ENCODE measurements at regions of chr12 and their contacts with region 1.

Region 1: DNA sequence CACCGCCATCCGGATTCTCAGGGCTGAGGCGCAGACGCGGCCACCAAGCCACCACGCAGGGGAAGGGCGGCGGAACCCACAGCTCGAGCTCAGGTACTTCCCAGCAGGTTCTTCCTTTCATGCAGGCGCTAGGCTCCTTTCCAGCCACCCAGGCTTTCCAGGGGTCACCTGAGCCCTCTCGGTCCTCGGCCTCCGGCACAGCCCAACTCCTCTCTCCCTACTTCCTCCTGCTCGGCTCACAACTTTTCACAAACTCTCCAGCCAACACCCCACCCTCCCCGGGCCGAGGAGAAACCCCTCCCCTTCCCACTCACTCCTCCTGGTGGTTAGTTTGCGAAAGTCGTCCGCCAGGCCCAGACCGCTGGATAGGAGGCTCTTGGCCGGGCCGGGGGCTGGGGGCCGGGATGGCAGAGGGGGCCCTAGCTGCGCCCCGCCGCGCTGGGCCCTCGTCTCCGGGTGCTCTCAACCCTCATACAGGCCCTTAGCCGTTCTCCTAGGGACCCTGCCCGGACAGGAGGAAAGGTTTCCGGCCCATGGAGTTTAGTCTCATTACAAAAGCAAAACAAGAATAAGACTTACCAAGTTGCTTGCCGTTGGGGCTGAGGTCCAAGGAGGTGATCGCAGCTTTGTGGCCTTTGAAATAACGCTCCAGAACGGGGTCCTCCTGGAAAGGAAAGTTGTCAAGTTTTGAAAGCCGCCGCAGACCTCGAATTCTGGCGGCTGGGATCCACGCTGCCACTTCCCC is at the start of gene GALNT4:
- DNase-seq: peak; percentile 75
- ATAC-seq: peak; percentile 78
- H3K4me3 Mint-ChIP-seq: peak within 1 kb of the TSS; percentile 99
- H3K27ac Mint-ChIP-seq: peak within 1 kb of the TSS; percentile 95
- H3K4me1 Mint-ChIP-seq: peaks cover 60% of the 10 kb centered on the region
- H3K27me3 Mint-ChIP-seq: no peaks in the 10 kb centered on the region
- CTCF ChIP-seq: no peak
- total RNA-seq, gene GALNT4: 6.2 and 6.3 TPM in 2 replicates

Region 2: DNA sequence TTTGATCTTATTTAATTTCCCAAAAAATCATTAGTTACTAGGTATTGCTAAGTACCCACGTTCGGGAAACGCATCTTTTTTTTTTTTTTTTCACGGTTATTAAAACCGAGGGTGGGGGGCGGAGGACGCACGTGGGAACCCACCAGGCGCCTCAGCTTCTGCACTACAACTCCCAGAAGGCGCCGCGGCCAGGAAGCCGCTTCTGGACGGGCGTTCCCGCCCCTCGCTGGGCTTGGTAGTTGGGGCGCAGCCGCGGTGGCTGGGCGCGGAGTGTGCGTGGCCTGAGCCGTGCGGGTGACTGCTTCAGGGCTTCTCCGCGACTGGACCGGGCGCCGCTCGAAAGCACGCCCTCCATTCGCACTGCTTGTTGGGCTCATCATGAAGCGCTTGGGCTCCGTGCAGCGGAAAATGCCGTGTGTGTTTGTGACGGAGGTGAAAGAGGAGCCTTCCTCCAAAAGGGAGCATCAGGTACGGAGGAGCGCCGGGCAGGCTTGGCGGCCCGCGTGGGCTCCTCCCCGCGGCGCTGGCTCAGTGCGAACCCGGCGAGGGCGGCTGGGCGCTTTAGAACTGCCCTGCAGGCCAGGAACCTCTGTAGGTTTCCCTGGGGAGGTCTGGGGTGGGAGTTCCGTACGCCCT is 1489.3 kb before region 1 on chr12:
- CTCF ChIA-PET with region 1: no interaction called
- POLR2A ChIA-PET with region 1: no interaction called
- intact Hi-C with region 1: loop called (anchors 1 kb)
- DNase-seq: peak; percentile 84
- ATAC-seq: peak; percentile 98
- H3K4me3 Mint-ChIP-seq: peak overlapping the region; percentile 97
- H3K27ac Mint-ChIP-seq: peak overlapping the region; percentile 93
- H3K4me1 Mint-ChIP-seq: peaks cover 31% of the 10 kb centered on the region
- H3K27me3 Mint-ChIP-seq: no peaks in the 10 kb centered on the region
- CTCF ChIP-seq: no peak

Region 3: GRCh38 chr12:89051065-89051677 is 473.5 kb before region 1 on chr12:
- CTCF ChIA-PET with region 1: interaction called, 3 read pairs
- POLR2A ChIA-PET with region 1: no interaction called
- intact Hi-C with region 1: loop called (anchors 1 kb)
- DNase-seq: no peak
- ATAC-seq: peak; percentile 67
- H3K4me3 Mint-ChIP-seq: no peak overlapping the region
- H3K27ac Mint-ChIP-seq: no peak overlapping the region
- H3K4me1 Mint-ChIP-seq: no peaks in the 10 kb centered on the region
- H3K27me3 Mint-ChIP-seq: no peaks in the 10 kb centered on the region
- CTCF ChIP-seq: no peak

Region 4: DNA sequence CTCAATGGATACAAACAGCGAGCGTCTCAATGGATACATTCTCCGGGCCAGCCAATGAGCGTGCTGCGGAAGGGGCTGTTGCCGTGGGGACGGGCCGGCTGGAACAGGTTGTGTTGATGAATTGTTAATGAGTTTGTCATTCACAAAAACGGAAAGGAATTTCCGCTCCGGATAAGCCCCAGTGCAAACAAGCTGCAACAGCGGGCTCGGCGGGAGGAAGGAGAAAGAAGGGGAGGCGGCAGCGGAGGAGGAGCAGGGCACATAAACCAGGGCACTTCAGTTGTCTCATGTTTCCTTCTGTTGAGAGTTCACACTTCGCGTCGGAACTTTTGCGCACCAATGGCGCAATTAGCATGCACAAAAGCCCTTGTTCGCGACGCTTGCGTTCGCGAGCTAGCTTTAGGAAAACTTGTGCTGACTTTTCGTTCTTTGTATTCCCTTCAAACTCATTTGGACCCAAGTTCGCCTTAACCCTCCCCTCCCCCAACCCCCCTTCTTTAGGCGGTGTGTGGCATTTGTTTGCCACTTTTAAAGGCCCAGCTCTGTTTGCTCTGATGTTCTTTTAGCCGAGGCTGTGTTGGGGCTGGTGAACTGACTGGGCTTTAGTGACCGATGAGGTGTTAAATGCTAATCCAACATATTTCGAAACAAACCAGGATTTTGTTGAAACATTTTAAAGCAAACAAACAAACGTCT is 172.1 kb before region 1 on chr12 and contains the start of gene DUSP6:
- CTCF ChIA-PET with region 1: no interaction called
- POLR2A ChIA-PET with region 1: interaction called, 11 read pairs
- intact Hi-C with region 1: loop called (anchors 1 kb)
- DNase-seq: peak; percentile 62
- ATAC-seq: peak; percentile 61
- H3K4me3 Mint-ChIP-seq: peak within 1 kb of the TSS; percentile 84
- H3K27ac Mint-ChIP-seq: peak within 1 kb of the TSS; percentile 82
- H3K4me1 Mint-ChIP-seq: peaks cover 62% of the 10 kb centered on the region
- H3K27me3 Mint-ChIP-seq: no peaks in the 10 kb centered on the region
- CTCF ChIP-seq: no peak
- total RNA-seq, gene DUSP6: 1.6 and 1.8 TPM in 2 replicates

Region 5: DNA sequence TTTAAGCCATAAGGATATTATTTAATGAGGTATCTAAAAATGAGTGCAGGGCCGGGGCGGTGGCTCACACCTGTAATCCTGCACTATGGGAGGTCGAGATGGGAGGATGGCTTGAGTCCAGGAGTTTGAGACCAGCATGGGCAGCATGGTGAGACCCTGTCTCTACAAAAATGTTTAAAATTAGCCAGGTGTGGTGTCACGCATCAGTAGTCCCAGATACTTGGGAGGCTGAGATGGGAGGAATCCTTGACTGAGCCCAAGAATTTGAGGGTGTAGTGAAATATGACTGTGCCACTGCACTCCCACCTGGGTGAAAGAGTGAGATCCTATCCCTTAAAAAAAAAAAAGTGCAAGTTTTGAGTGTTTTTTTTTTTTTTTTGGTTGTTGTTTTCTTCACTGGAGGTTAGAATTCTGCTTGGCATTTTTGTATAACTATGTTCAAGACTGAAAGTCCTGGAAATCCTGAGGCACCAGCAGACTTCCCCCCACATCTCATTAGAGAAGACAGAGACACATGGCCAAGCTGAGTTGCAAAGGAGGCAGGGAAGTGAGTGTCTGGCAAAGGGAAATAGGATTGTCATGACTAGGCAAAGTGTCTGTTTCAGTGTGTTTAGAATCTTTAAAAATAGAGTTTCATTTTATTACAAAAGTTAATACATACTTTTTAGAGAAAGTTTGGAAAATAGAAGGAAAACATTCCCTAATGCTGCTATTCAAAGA is 118.9 kb before region 1 on chr12:
- CTCF ChIA-PET with region 1: no interaction called
- POLR2A ChIA-PET with region 1: no interaction called
- intact Hi-C with region 1: no loop called
- DNase-seq: no peak
- ATAC-seq: no peak
- H3K4me3 Mint-ChIP-seq: no peak overlapping the region
- H3K27ac Mint-ChIP-seq: no peak overlapping the region
- H3K4me1 Mint-ChIP-seq: no peaks in the 10 kb centered on the region
- H3K27me3 Mint-ChIP-seq: no peaks in the 10 kb centered on the region
- CTCF ChIP-seq: no peak

Region 6: DNA sequence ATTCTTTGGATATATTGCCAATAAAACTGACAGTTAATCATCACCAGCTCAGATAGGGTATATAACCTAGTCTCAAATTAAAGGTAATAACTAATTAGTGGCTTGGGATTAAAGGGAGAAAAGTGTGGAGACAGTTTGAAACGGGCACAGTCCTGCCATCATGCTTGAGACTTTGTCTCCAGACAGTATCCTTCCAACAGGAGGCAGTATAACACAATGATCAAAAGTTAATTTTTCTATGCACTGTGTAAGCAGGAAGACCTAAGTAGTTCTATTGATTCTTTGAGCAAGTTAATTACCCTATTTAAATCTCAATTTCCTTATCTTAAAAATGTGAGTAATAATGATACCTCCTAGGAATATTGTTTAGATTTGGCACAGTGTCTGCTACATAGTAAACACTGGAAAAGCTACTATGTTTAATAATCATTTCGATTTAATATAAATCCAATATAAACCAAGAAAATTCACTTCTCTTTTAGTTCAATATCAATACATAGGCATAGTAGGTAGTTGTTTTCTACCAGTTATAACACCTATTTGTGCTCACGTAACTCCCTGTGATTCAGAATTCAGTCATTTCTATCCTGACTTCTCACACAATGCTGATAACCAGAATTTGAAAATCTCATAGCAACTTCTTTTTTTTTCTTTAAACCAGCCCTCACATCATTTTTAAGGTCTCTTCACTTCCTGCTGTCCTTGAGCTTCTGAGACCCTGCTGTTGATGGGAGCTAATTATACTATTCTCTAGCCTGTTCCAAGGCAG is 53.8 kb before region 1 on chr12:
- CTCF ChIA-PET with region 1: interaction called, 15 read pairs
- POLR2A ChIA-PET with region 1: interaction called, 4 read pairs
- intact Hi-C with region 1: loop called (anchors 1 kb)
- DNase-seq: no peak
- ATAC-seq: peak; percentile 70
- H3K4me3 Mint-ChIP-seq: no peak overlapping the region
- H3K27ac Mint-ChIP-seq: no peak overlapping the region
- H3K4me1 Mint-ChIP-seq: peaks cover 49% of the 10 kb centered on the region
- H3K27me3 Mint-ChIP-seq: no peaks in the 10 kb centered on the region
- CTCF ChIP-seq: no peak

Region 7: DNA sequence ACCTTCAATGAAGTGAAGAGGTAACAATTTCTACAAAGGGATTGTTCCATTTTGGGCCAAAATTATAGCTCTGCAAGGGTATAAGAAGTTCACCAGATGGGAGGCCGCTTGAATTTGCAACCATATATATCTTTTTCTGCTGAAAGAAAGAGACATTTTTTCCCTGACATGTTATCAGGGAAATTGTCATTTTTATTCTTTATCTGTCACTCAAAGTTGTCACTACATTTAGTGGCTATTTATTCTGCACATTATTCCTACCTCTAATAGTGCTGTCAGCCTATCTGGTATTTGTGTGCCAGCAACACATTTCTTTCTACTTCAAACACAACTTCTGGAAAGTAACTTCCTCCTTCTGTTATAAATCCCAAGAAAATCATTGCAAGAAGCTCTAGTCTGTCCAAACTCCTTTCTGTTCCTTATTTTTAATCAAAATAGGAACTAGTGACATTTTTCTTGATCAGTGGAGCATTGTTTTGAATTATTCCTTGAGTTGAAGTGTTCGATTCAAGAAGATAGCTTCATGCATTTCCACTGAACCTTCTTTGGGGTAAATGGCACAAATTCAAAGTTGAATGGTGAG is 321.9 kb after region 1 on chr12:
- CTCF ChIA-PET with region 1: no interaction called
- POLR2A ChIA-PET with region 1: no interaction called
- intact Hi-C with region 1: no loop called
- DNase-seq: no peak
- ATAC-seq: no peak
- H3K4me3 Mint-ChIP-seq: no peak overlapping the region
- H3K27ac Mint-ChIP-seq: no peak overlapping the region
- H3K4me1 Mint-ChIP-seq: peaks cover 1% of the 10 kb centered on the region
- H3K27me3 Mint-ChIP-seq: no peaks in the 10 kb centered on the region
- CTCF ChIP-seq: no peak

Region 8: DNA sequence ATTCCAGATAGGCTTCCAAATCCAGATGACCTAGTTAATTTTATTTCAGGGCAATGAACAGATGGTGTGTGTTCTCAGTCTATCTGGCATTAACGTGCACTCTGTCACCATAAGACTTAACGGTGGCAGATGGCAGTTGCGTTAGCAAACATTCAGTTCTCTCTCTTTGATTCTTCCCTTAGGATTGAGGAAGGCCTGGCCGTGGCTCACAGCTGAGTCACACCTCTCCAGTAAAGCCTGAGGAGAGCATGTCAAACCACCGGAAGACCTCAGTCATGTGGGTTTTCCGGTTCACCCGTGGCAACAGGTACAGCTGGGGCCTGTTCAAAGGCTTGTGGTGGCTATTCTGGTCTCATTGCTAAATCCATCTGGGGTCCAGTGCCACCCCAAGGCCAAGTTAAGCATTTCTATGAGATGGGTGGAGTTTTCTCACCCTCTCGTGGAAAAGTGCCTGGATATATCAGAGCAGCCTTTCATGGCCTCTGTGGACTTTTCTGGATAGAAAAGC is 729.0 kb after region 1 on chr12:
- CTCF ChIA-PET with region 1: no interaction called
- POLR2A ChIA-PET with region 1: no interaction called
- intact Hi-C with region 1: loop called (anchors 5 kb)
- DNase-seq: peak; percentile 40
- ATAC-seq: peak; percentile 94
- H3K4me3 Mint-ChIP-seq: peak overlapping the region; percentile 64
- H3K27ac Mint-ChIP-seq: peak overlapping the region; percentile 87
- H3K4me1 Mint-ChIP-seq: peaks cover 26% of the 10 kb centered on the region
- H3K27me3 Mint-ChIP-seq: no peaks in the 10 kb centered on the region
- CTCF ChIP-seq: no peak